ENCODE measurements at regions of chr2 and their contacts with region 1.

Region 1: DNA sequence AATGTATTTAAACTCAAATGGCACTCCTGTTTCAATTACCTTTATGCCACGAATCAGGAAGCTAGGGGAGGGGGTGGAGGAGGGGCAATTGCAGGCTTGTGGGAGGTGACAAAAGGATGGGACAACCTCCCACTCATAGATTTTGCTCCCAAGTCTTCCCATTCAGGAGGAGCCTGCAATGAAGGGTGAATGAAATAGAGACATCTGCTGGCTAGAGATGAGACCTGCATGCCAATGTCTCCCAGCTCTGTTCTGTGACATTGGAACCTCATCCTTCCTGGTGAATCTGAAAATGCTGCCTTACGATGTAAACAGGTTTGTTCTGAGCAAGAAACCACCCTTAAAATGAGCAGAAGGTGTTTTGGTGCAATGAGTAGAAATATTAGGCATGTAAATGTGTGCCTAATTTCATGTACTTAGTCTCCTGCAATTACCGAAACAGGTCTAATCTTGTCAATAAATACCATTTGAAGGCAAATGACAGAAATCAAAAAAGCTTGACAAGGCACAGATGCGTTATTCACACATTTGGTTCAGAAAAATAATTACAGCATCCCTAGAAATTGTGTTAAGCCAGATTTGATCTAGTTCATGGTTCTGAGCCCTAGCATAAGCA is 2.7 kb upstream of the PID1 start:
- DNase-seq: peak in 1 of 2 donors; percentile 77
- H3K4me3 ChIP-seq: peak overlapping the region; percentile 44 to 51
- H3K27ac ChIP-seq: peak overlapping the region; percentile 7 to 20
- H3K4me1 ChIP-seq: peaks cover 6 to 8% of the 10 kb centered on the region in 2 donors
- H3K27me3 ChIP-seq: no peaks in the 10 kb centered on the region
- CTCF ChIP-seq: peak; percentile 71 to 88 (median 84)

Region 2: GRCh38 chr2:228681426-228681825 is 592.4 kb before region 1 on chr2:
- intact Hi-C with region 1: loop called (anchors 5 kb)
- DNase-seq: no peak
- H3K4me3 ChIP-seq: no peak overlapping the region
- H3K27ac ChIP-seq: no peak overlapping the region
- H3K4me1 ChIP-seq: peaks cover 0 to 4% of the 10 kb centered on the region in 2 donors
- H3K27me3 ChIP-seq: no peaks in the 10 kb centered on the region
- CTCF ChIP-seq: peak; percentile 11 to 63 (median 58)

Region 3: DNA sequence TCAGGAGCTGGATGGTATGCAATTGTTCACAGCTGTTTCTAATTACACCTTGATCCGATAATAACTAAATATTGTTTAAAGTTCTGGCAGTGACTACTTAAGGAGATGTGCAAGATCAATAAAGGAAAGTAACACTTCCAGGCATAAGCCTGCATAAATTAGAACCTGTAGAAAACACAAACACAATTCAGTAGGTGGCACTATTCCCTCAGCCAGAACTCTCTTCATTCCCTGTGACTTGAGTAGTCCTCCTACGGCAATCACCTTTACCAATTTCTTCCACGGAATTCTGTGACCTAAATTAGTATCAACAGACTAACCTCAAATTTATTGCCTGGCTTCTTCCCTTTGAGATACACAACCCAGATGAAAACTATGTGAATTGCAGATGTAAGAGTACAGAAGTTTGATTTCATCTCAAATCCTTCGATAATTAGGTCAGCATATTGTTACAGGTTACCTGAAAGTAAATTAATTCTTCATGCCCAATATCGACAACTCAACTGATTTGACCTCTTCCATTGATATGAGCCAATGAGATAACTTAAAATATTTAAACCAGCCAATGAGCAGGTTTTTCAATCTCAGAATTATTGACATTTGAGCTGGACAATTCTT is 140.6 kb before region 1 on chr2:
- intact Hi-C with region 1: loop called (anchors 1 kb)
- DNase-seq: no peak
- H3K4me3 ChIP-seq: no peak overlapping the region
- H3K27ac ChIP-seq: no peak overlapping the region
- H3K4me1 ChIP-seq: peaks cover 0 to 15% of the 10 kb centered on the region in 2 donors
- H3K27me3 ChIP-seq: no peaks in the 10 kb centered on the region
- CTCF ChIP-seq: peak; percentile 46 to 62 (median 51)

Region 4: GRCh38 chr2:229235131-229235914 is 38.5 kb before region 1 on chr2:
- intact Hi-C with region 1: no loop called
- DNase-seq: peak in 1 of 2 donors; percentile 66
- H3K4me3 ChIP-seq: no peak overlapping the region
- H3K27ac ChIP-seq: peak overlapping the region in 1 of 2 donors; percentile 16
- H3K4me1 ChIP-seq: peaks cover 0 to 21% of the 10 kb centered on the region in 2 donors
- H3K27me3 ChIP-seq: no peaks in the 10 kb centered on the region
- CTCF ChIP-seq: no peak

Region 5: GRCh38 chr2:229445019-229445418 is 171.2 kb after region 1 on chr2:
- intact Hi-C with region 1: loop called (anchors 5 kb)
- DNase-seq: peak; percentile 74 to 93
- H3K4me3 ChIP-seq: peak overlapping the region in 1 of 2 donors; percentile 40
- H3K27ac ChIP-seq: peak overlapping the region; percentile 97 to 98
- H3K4me1 ChIP-seq: peaks cover 8 to 35% of the 10 kb centered on the region in 2 donors
- H3K27me3 ChIP-seq: no peaks in the 10 kb centered on the region
- CTCF ChIP-seq: peak; percentile 6 to 32 (median 28)

Measured in ascending aorta (tissue), 2 donors.